ENCODE measurements at regions of chr16 and their contacts with region 1.

Region 1: GRCh38 chr16:9123871-9124270 is 32.4 kb downstream of the HAPSTR1 start:
- DNase-seq: peak; percentile 65 to 83
- ATAC-seq: peak; percentile 89 to 94 (median 91)
- H3K4me3 ChIP-seq: no peak overlapping the region
- H3K27ac ChIP-seq: peak overlapping the region; percentile 61
- H3K4me1 ChIP-seq: peaks cover 36% of the 10 kb centered on the region
- H3K27me3 ChIP-seq: no peaks in the 10 kb centered on the region
- CTCF ChIP-seq: no peak

Region 2: DNA sequence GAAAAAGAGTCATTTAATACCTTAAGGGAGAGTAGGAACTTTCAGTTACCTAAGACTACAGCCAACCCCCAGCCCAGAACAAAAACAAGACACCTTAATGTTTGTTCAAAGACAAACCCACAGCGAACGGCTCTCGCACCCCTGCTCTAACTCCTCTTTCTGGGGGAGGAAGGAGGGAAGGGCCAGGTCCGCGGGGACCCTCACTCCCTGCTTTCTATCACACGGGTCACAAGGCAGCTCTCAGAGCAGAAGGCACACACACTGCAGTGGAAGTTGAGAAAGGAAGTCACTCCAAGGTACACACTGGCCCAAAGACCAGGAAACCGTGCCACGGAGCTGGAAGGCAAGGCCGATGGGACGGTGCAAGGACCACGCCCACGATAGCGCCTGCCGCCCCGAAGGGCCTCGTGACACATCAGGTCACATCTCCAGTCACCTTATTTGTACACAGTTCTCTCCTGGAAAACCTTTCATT is 231.7 kb before region 1 on chr16:
- intact Hi-C with region 1: loop called in 1 of 2 experiments (anchors 10 kb)
- DNase-seq: peak; percentile 53 to 70
- ATAC-seq: peak in 3 of 4 donors; percentile 17 to 45 (median 30)
- H3K4me3 ChIP-seq: no peak overlapping the region
- H3K27ac ChIP-seq: peak overlapping the region; percentile 30
- H3K4me1 ChIP-seq: peaks cover 27% of the 10 kb centered on the region
- H3K27me3 ChIP-seq: no peaks in the 10 kb centered on the region
- CTCF ChIP-seq: no peak

Region 3: DNA sequence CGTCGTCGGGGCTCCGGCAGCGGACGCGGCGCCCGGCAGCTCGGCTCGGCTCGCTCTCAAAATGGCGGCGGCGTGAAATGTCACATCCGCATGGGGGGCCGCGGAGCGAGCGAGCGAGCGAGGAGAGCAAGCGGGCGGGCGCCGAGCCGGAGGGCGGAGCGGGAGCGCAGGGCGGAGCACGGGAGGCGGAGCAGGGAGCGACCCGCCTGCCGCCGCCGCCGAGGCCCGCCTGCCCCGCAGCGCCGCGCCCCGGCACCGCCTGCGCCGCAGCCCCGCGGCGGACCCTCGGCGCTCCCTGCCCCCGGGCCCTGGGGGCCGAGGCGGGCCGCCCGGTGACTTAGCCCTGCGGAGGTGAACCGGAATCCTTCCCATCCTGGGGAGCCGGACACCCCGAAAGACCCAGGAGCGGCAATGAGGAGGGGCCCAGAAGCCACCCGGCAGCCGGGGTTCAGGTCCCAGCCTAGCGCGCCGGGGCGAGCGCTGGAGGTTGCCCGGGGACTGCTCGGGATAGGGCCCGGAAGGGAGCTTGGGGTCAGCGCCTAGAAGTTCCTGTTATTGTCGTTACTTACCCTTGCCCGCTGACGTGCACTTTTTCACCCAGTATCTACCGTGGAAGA is 159.9 kb before region 1 on chr16 and contains the start of gene USP7:
- intact Hi-C with region 1: loop called in 1 of 2 experiments (anchors 10 kb)
- DNase-seq: peak; percentile 94 to 97
- ATAC-seq: peak; percentile 93 to 95 (median 94)
- H3K4me3 ChIP-seq: peak within 1 kb of the TSS; percentile 81
- H3K27ac ChIP-seq: peak within 1 kb of the TSS; percentile 87
- H3K4me1 ChIP-seq: peaks cover 34% of the 10 kb centered on the region
- H3K27me3 ChIP-seq: no peaks in the 10 kb centered on the region
- CTCF ChIP-seq: no peak
- total RNA-seq, gene USP7: 87.5 to 135 (median 120) TPM

Measured in psoas muscle (tissue), 8 donors.